ENCODE measurements at regions of chr3 and their contacts with region 1.

Region 1: DNA sequence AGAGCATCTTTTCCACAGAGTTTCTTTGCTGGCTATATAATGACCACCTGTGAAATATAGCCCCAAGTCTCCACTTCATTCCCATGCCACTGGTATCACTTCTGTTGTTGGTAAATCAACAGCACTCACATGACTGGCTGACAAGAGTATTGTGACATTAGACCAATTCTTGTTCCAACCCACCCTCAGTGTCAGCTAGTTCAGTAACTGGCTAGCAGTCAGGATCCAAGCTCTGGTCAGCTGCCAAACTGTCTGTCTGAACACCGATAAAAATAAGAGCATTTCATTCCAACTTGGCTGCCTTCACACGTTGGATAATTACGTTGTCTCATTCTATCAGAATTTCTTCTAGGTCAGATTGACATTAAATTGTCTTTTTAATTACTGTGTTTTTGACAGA is 166.5 kb downstream of the USP13 start:
- DNase-seq: no peak
- H3K4me3 ChIP-seq: no peak overlapping the region
- H3K27ac ChIP-seq: no peak overlapping the region
- H3K4me1 ChIP-seq: no peaks in the 10 kb centered on the region
- H3K27me3 ChIP-seq: no peaks in the 10 kb centered on the region; the same call in 1 of the 2 replicates
- CTCF ChIP-seq: no peak

Region 2: DNA sequence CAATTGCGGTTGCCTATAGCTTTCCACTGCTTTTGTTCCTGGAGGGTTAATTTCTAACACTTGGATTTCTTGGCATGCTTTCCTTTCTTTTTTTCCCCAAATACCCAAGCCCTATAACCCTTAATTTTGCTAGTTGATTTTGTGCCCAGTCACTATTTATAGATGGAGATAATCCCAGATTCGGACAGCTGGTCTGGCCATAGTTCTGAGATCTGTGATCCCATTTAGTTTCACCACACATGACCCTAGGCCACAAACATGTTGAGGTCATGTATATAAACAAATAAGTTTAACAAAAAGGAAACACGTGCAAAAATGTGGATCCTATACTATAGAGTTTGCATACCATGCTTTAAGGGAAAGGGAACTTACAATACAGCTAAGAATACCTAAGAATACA is 859.2 kb before region 1 on chr3:
- CTCF ChIA-PET with region 1: no interaction called
- POLR2A ChIA-PET with region 1: no interaction called
- intact Hi-C with region 1: no loop called
- DNase-seq: no peak
- H3K4me3 ChIP-seq: no peak overlapping the region
- H3K27ac ChIP-seq: no peak overlapping the region
- H3K4me1 ChIP-seq: no peaks in the 10 kb centered on the region
- H3K27me3 ChIP-seq: no peaks in the 10 kb centered on the region
- CTCF ChIP-seq: no peak

Region 3: GRCh38 chr3:179743913-179744312 is 75.5 kb before region 1 on chr3:
- CTCF ChIA-PET with region 1: no interaction called
- POLR2A ChIA-PET with region 1: interaction called, 14 read pairs
- intact Hi-C with region 1: no loop called
- DNase-seq: no peak
- H3K4me3 ChIP-seq: no peak overlapping the region
- H3K27ac ChIP-seq: no peak overlapping the region
- H3K4me1 ChIP-seq: no peaks in the 10 kb centered on the region
- H3K27me3 ChIP-seq: no peaks in the 10 kb centered on the region
- CTCF ChIP-seq: no peak

Region 4: GRCh38 chr3:180246688-180247195 is 427.4 kb after region 1 on chr3:
- CTCF ChIA-PET with region 1: no interaction called
- POLR2A ChIA-PET with region 1: no interaction called
- intact Hi-C with region 1: no loop called
- DNase-seq: no peak
- H3K4me3 ChIP-seq: no peak overlapping the region
- H3K27ac ChIP-seq: no peak overlapping the region
- H3K4me1 ChIP-seq: peaks cover 13% of the 10 kb centered on the region
- H3K27me3 ChIP-seq: no peaks in the 10 kb centered on the region
- CTCF ChIP-seq: no peak

Region 5: GRCh38 chr3:180433152-180433551 is 613.8 kb after region 1 on chr3:
- CTCF ChIA-PET with region 1: no interaction called
- POLR2A ChIA-PET with region 1: no interaction called
- intact Hi-C with region 1: no loop called
- DNase-seq: peak in 1 of 2 experiments; percentile 46
- H3K4me3 ChIP-seq: no peak overlapping the region
- H3K27ac ChIP-seq: no peak overlapping the region
- H3K4me1 ChIP-seq: peaks cover 11% of the 10 kb centered on the region; the same call in 1 of the 2 replicates
- H3K27me3 ChIP-seq: no peaks in the 10 kb centered on the region
- CTCF ChIP-seq: no peak